ENCODE measurements at regions of chr1 and their contacts with region 1.

Region 1: GRCh38 chr1:39098546-39099250 is 72.5 kb downstream of the NDUFS5 start:
- DNase-seq: peak; percentile 70
- H3K4me3 ChIP-seq: no peak overlapping the region
- H3K4me3 Mint-ChIP-seq: no peak overlapping the region
- H3K27ac Mint-ChIP-seq: no peak overlapping the region
- H3K4me1 ChIP-seq: peaks cover 4% of the 10 kb centered on the region; the same call in 1 of the 2 replicates
- H3K4me1 Mint-ChIP-seq: peaks cover 5% of the 10 kb centered on the region
- H3K27me3 ChIP-seq: no peaks in the 10 kb centered on the region
- H3K27me3 Mint-ChIP-seq: no peaks in the 10 kb centered on the region
- CTCF ChIP-seq: peak; percentile 42 to 54

Region 2: DNA sequence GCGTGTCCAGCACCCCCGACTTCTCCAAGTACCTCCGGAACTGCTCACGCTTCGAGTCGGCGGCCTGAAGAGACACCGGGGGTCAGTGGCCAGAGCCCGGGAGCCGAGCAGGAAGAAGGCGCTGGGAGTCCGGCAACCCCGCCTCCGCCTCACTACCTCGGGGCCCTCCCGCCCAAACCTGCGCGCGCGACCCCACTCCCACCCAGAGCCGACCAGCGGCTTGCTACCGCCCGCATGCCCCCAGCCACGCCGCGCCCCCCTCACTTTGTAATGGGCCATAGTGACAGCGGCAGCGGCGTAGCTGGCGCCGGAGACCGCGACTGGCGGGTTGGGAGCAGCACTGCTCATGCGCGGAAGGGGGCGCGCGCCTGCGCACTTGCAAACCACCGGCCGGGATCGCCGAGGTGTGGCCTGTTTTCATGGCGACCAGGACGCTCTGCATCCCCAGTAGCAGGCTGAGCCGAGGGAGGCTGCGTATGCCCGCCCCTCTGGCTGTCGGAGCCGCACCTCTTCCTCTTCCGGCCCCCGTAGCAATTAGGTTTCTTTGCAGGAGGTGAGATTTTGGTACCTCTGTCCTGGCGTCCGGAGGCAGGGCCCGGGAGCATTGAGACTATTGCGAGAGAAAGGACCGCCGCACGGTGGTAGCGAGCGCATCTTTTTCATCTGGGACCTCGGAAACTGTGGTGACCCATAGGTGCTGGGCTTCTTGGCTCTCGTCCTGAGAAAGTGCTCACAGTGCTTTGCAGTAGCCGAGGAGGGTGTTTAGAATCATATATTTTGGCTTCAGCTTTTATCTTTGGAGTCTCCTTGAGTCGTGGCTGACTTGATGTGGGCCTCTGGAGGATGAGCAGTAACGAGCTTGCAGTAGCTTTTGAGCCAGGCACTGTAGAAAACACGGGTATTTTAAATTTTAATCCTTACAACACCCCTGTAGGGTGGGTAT is 225.4 kb before region 1 on chr1 and contains the start of gene MYCBP:
- CTCF ChIA-PET with region 1: interaction called, 4 read pairs
- POLR2A ChIA-PET with region 1: no interaction called
- intact Hi-C with region 1: loop called (anchors 10 kb)
- DNase-seq: peak; percentile 93 to 94
- H3K4me3 ChIP-seq: peak within 1 kb of the TSS; percentile 59
- H3K4me3 Mint-ChIP-seq: peak within 1 kb of the TSS; percentile 78
- H3K27ac Mint-ChIP-seq: no peak within 1 kb of the TSS
- H3K4me1 ChIP-seq: no peaks in the 10 kb centered on the region
- H3K4me1 Mint-ChIP-seq: peaks cover 7% of the 10 kb centered on the region
- H3K27me3 ChIP-seq: no peaks in the 10 kb centered on the region
- H3K27me3 Mint-ChIP-seq: no peaks in the 10 kb centered on the region
- CTCF ChIP-seq: no peak
- total RNA-seq, gene MYCBP: 21.8 and 27.7 TPM in 2 replicates

Region 3: GRCh38 chr1:38919130-38919529 is 179.6 kb before region 1 on chr1:
- CTCF ChIA-PET with region 1: no interaction called
- POLR2A ChIA-PET with region 1: no interaction called
- intact Hi-C with region 1: loop called (anchors 10 kb)
- DNase-seq: peak; percentile 34 to 45
- H3K4me3 ChIP-seq: no peak overlapping the region
- H3K4me3 Mint-ChIP-seq: no peak overlapping the region
- H3K27ac Mint-ChIP-seq: no peak overlapping the region
- H3K4me1 ChIP-seq: peaks cover 4% of the 10 kb centered on the region; the same call in 1 of the 2 replicates
- H3K4me1 Mint-ChIP-seq: no peaks in the 10 kb centered on the region
- H3K27me3 ChIP-seq: no peaks in the 10 kb centered on the region
- H3K27me3 Mint-ChIP-seq: no peaks in the 10 kb centered on the region
- CTCF ChIP-seq: peak in 1 of 2 experiments; percentile 37

Region 4: DNA sequence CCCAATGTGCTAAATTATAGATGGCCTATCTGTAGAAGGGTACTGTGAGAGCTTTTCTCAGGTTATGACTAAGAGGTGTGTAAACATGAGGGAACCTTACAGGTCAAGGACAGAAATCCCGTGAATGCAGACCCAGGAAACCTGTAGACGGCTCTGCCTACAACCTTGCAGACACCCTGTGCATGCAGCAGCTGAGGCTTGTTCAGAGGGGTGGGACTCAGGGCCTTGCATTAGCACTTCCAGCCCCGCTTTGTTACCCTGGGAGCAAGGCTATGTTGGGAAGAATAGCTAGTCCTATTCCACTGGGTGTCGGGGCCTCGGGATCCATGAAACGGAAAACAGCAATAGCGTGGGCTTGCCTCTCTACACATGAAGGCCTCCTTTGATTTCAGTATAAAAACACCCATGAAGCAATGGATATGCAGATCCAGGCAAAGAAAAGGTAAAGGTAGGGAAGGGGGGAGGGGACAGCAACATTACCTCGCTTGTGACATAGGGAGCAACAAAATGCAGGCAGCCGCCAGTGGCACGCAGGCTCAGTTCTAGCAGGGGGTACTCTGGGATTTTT is 82.0 kb before region 1 on chr1:
- CTCF ChIA-PET with region 1: no interaction called
- POLR2A ChIA-PET with region 1: no interaction called
- intact Hi-C with region 1: no loop called
- DNase-seq: peak in 1 of 2 experiments; percentile 41
- H3K4me3 ChIP-seq: no peak overlapping the region
- H3K4me3 Mint-ChIP-seq: no peak overlapping the region
- H3K27ac Mint-ChIP-seq: no peak overlapping the region
- H3K4me1 ChIP-seq: no peaks in the 10 kb centered on the region
- H3K4me1 Mint-ChIP-seq: no peaks in the 10 kb centered on the region
- H3K27me3 ChIP-seq: no peaks in the 10 kb centered on the region
- H3K27me3 Mint-ChIP-seq: no peaks in the 10 kb centered on the region
- CTCF ChIP-seq: no peak

Region 5: DNA sequence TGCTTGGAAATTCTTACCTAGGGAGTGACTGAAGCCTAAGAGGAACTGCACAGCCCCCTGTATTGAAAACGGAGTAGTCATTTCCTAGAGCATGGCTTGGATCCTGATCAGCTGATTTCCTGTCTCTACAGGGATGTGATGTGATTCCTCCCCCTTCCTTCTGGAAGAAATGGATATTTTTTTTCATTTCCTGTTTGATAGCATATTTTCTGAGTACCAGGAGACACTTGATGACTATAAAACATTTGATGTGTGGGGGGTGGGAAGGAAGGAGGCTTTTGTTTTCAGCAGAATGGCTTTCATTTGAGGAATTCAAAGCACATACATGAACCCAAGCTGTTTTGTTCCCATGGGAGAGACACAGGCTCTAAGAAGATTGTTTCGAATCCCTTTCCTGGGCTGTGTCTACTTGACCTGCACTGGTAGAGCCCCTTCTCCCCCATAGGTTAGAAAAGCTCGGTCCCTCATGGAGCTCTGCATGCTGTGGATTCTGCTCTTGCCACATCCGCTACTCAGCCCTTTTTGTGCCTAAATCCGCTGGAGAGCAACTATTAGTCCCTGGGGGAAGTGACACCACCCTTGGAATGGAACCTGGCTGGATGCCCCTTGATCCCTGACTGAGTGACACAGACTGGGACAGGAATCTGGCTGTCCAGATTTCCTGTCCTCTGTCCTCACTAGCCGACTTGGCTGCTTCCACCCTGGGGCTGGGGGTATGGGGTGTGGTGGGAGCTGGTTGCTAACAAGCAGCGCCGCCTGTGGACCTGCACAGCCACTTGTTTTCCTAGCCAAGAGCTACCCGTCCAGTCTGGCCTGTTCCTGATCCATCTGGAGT is 34.0 kb after region 1 on chr1:
- CTCF ChIA-PET with region 1: interaction called, 5 read pairs
- POLR2A ChIA-PET with region 1: no interaction called
- intact Hi-C with region 1: loop called (anchors 2 kb)
- DNase-seq: peak; percentile 88 to 93
- H3K4me3 ChIP-seq: no peak overlapping the region
- H3K4me3 Mint-ChIP-seq: peak overlapping the region; percentile 50
- H3K27ac Mint-ChIP-seq: peak overlapping the region; percentile 77
- H3K4me1 ChIP-seq: peaks cover 22% of the 10 kb centered on the region
- H3K4me1 Mint-ChIP-seq: peaks cover 18% of the 10 kb centered on the region
- H3K27me3 ChIP-seq: no peaks in the 10 kb centered on the region
- H3K27me3 Mint-ChIP-seq: no peaks in the 10 kb centered on the region
- CTCF ChIP-seq: peak in 1 of 2 experiments; percentile 52

Region 6: GRCh38 chr1:39258146-39258924 is 159.6 kb after region 1 on chr1:
- CTCF ChIA-PET with region 1: interaction called, 14 read pairs
- POLR2A ChIA-PET with region 1: no interaction called
- intact Hi-C with region 1: loop called (anchors 1 kb)
- DNase-seq: peak; percentile 55 to 70
- H3K4me3 ChIP-seq: no peak overlapping the region
- H3K4me3 Mint-ChIP-seq: no peak overlapping the region
- H3K27ac Mint-ChIP-seq: no peak overlapping the region
- H3K4me1 ChIP-seq: no peaks in the 10 kb centered on the region
- H3K4me1 Mint-ChIP-seq: no peaks in the 10 kb centered on the region
- H3K27me3 ChIP-seq: no peaks in the 10 kb centered on the region
- H3K27me3 Mint-ChIP-seq: no peaks in the 10 kb centered on the region
- CTCF ChIP-seq: peak; percentile 62 to 75

Measured in Caco-2 (cell line).